CD8-positive, alpha-beta T cell (primary cell): ENCODE measurements at regions of chr7 and their contacts with region 1.

Region 1: GRCh38 chr7:142478479-142479072 is 220.7 kb upstream of the PRSS58 start:
- DNase-seq: peak in 3 of 9 experiments; percentile 32 to 67 (median 56)
- ATAC-seq: peak; percentile 39
- H3K4me3 ChIP-seq: no peak overlapping the region
- H3K4me3 Mint-ChIP-seq: no peak overlapping the region
- H3K27ac ChIP-seq: no peak overlapping the region
- H3K27ac Mint-ChIP-seq: peak overlapping the region; percentile 53
- H3K4me1 ChIP-seq: peaks cover 80% of the 10 kb centered on the region
- H3K4me1 Mint-ChIP-seq: peaks cover 80% of the 10 kb centered on the region
- H3K27me3 ChIP-seq: no peaks in the 10 kb centered on the region
- H3K27me3 Mint-ChIP-seq: no peaks in the 10 kb centered on the region
- CTCF ChIP-seq: peak; percentile 68

Region 2: DNA sequence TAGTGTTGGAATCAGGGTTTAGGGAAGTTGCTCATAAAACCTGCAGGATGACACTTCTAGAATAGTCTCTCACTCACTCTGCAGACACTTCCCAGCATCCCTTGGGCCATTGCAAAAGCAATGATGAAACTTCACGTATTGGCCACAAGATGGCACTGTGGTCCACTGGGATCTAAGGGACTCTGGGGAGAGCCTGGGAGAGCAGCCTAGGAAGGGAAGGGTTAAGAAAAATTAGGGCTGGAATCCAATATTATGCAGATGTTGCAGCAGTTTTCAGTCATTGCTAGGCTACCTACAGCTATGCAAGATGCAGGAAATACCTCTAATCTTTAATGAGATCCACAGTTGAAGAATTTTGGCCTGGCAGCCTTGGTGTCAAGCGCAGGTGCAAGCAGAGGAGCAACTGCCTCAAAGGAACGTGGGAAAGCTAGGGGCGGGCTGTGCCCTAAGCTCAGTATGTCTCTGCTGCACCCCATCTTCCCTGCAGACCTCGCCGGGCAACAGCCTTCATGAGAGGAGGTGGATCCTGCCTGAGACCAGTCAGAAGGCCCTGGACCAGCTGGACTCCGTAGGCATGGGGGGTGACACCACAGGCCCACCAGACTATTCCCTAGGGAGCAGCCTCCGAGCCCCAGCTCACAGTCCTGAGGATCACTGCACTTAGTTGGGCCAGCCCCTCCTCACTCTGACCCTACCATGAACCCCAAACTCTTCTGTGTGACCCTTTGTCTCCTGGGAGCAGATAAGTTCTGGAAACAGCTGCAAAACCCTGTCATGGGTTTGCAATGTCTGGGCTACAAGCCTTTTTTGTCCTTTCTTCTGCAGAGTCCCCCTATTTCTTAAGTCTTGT is 92.9 kb before region 1 on chr7:
- CTCF ChIA-PET with region 1: interaction called, 4 read pairs
- POLR2A ChIA-PET with region 1: no interaction called
- intact Hi-C with region 1: loop called in 1 of 2 experiments (anchors 1 kb)
- DNase-seq: peak in 5 of 9 experiments; percentile 23 to 64 (median 52)
- ATAC-seq: peak; percentile 62
- H3K4me3 ChIP-seq: no peak overlapping the region
- H3K4me3 Mint-ChIP-seq: no peak overlapping the region
- H3K27ac ChIP-seq: no peak overlapping the region
- H3K27ac Mint-ChIP-seq: no peak overlapping the region
- H3K4me1 ChIP-seq: peaks cover 18% of the 10 kb centered on the region
- H3K4me1 Mint-ChIP-seq: peaks cover 26% of the 10 kb centered on the region
- H3K27me3 ChIP-seq: no peaks in the 10 kb centered on the region
- H3K27me3 Mint-ChIP-seq: no peaks in the 10 kb centered on the region
- CTCF ChIP-seq: peak; percentile 43

Region 3: DNA sequence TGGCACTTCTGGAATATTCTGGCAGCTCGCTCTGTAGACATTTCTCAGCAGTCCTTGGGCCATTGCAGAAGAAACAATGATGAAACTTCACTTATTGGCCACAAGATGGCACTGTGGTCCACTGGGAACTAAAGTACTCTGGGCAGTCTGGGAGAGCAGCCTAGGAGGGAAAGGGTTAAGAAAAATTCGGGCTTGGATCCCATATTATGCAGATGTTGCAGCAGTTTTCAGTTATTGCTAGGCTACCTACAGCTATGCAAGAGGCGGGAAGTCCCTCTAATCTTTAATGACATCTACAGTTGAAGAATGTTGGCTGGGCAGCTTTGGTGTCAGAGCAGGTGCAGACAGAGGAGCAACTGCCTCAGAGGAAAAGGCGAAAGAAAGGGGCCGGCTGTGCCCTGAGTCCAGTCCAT is 19.0 kb before region 1 on chr7:
- CTCF ChIA-PET with region 1: interaction called, 378 read pairs
- POLR2A ChIA-PET with region 1: interaction called, 17 read pairs
- intact Hi-C with region 1: loop called (anchors 1 to 2 kb)
- DNase-seq: peak in 3 of 9 experiments; percentile 25 to 69 (median 56)
- ATAC-seq: peak; percentile 52
- H3K4me3 ChIP-seq: no peak overlapping the region
- H3K4me3 Mint-ChIP-seq: peak overlapping the region; percentile 27
- H3K27ac ChIP-seq: no peak overlapping the region
- H3K27ac Mint-ChIP-seq: peak overlapping the region; percentile 41
- H3K4me1 ChIP-seq: peaks cover 33% of the 10 kb centered on the region
- H3K4me1 Mint-ChIP-seq: peaks cover 55% of the 10 kb centered on the region
- H3K27me3 ChIP-seq: no peaks in the 10 kb centered on the region
- H3K27me3 Mint-ChIP-seq: no peaks in the 10 kb centered on the region
- CTCF ChIP-seq: peak; percentile 52

Region 4: GRCh38 chr7:142508258-142508689 is 29.7 kb after region 1 on chr7:
- CTCF ChIA-PET with region 1: interaction called, 11 read pairs
- POLR2A ChIA-PET with region 1: no interaction called
- intact Hi-C with region 1: loop called in 1 of 2 experiments (anchors 2 kb)
- DNase-seq: peak in 5 of 9 experiments; percentile 16 to 51 (median 29)
- ATAC-seq: peak; percentile 76
- H3K4me3 ChIP-seq: no peak overlapping the region
- H3K4me3 Mint-ChIP-seq: peak overlapping the region; percentile 26
- H3K27ac ChIP-seq: no peak overlapping the region
- H3K27ac Mint-ChIP-seq: peak overlapping the region; percentile 81
- H3K4me1 ChIP-seq: peaks cover 31% of the 10 kb centered on the region
- H3K4me1 Mint-ChIP-seq: peaks cover 37% of the 10 kb centered on the region
- H3K27me3 ChIP-seq: no peaks in the 10 kb centered on the region
- H3K27me3 Mint-ChIP-seq: no peaks in the 10 kb centered on the region
- CTCF ChIP-seq: no peak

Region 5: GRCh38 chr7:142603870-142604448 is 125.4 kb after region 1 on chr7:
- CTCF ChIA-PET with region 1: no interaction called
- POLR2A ChIA-PET with region 1: no interaction called
- intact Hi-C with region 1: no loop called
- DNase-seq: peak; percentile 5 to 70 (median 48)
- ATAC-seq: peak; percentile 67
- H3K4me3 ChIP-seq: no peak overlapping the region
- H3K4me3 Mint-ChIP-seq: no peak overlapping the region
- H3K27ac ChIP-seq: no peak overlapping the region
- H3K27ac Mint-ChIP-seq: peak overlapping the region; percentile 28
- H3K4me1 ChIP-seq: no peaks in the 10 kb centered on the region
- H3K4me1 Mint-ChIP-seq: peaks cover 3% of the 10 kb centered on the region
- H3K27me3 ChIP-seq: no peaks in the 10 kb centered on the region
- H3K27me3 Mint-ChIP-seq: peaks cover 2% of the 10 kb centered on the region
- CTCF ChIP-seq: peak; percentile 68

Region 6: GRCh38 chr7:143287935-143288826 is 809.6 kb after region 1 on chr7 and contains the start of gene CASP2:
- CTCF ChIA-PET with region 1: no interaction called
- POLR2A ChIA-PET with region 1: no interaction called
- intact Hi-C with region 1: loop called in 1 of 2 experiments (anchors 1 kb)
- DNase-seq: peak; percentile 96 to 100 (median 99)
- ATAC-seq: peak; percentile 96
- H3K4me3 ChIP-seq: peak within 1 kb of the TSS; percentile 91 to 95
- H3K4me3 Mint-ChIP-seq: peak within 1 kb of the TSS; percentile 93
- H3K27ac ChIP-seq: peak within 1 kb of the TSS; percentile 64 to 72
- H3K27ac Mint-ChIP-seq: peak within 1 kb of the TSS; percentile 91
- H3K4me1 ChIP-seq: peaks cover 40% of the 10 kb centered on the region
- H3K4me1 Mint-ChIP-seq: peaks cover 53% of the 10 kb centered on the region
- H3K27me3 ChIP-seq: no peaks in the 10 kb centered on the region
- H3K27me3 Mint-ChIP-seq: no peaks in the 10 kb centered on the region
- CTCF ChIP-seq: peak; percentile 31
- total RNA-seq, gene CASP2: 16.0 to 19.1 TPM